IMR-90 (cell line): ENCODE measurements at regions of chr18 and their contacts with region 1.

Region 1: DNA sequence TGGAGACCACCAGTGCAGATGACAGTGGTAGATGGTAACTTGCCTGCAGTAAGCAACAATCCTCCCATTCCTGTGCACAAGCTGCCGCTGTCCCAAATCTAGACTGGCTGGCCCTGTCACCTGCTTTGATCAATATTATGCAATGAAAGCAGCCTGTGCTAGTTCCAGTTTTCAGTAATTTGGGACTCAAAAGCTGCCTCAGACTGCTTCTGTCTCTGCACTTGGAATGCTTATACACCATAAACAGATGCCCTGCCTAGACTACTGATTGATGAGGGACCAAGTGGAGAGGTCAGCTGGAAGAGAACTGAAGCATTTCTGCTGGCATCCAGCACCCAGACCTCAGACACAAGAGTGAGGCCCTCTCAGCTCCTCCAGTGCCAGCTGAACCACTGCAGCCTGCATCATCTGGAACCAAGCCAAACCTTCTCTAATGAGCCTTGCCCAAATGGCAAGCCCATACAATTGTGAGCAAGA is 24.9 kb downstream of the CCBE1 start:
- DNase-seq: no peak
- ATAC-seq: peak; percentile 43
- H3K4me3 ChIP-seq: no peak overlapping the region
- H3K27ac ChIP-seq: no peak overlapping the region
- H3K4me1 ChIP-seq: peaks cover 16% of the 10 kb centered on the region; the same call in 1 of the 2 replicates
- H3K27me3 ChIP-seq: no peaks in the 10 kb centered on the region
- CTCF ChIP-seq: no peak
- POLR2A ChIP-seq: no peak
- RAD21 ChIP-seq: no peak

Region 2: DNA sequence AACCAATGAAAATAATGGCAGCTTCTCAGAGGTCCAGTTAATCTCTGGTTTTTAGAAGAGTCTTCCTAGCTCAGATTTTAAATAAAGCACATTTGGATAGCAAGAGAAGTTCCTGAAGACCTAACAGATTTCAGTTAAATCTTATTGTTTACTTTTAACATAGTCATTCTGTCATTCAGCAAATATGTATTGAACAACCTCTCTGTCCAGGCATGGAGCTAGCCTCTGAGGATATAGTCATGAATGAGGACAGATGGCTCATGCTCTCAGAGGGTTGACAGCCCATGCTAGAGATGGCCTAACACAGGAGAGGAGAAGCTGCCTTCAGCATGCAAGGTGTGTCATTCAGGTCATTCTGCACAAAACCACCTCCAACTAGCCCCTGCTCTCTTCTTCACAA is 18.7 kb after region 1 on chr18:
- CTCF ChIA-PET with region 1: no interaction called
- POLR2A ChIA-PET with region 1: no interaction called
- dilution Hi-C with region 1: no loop called
- in situ Hi-C with region 1: no loop called
- intact Hi-C with region 1: loop called (anchors 2 kb)
- DNase-seq: peak; percentile 91
- ATAC-seq: peak; percentile 80
- H3K4me3 ChIP-seq: no peak overlapping the region
- H3K27ac ChIP-seq: no peak overlapping the region
- H3K4me1 ChIP-seq: peaks cover 22% of the 10 kb centered on the region
- H3K27me3 ChIP-seq: no peaks in the 10 kb centered on the region
- CTCF ChIP-seq: no peak
- POLR2A ChIP-seq: no peak
- RAD21 ChIP-seq: no peak